ENCODE measurements at regions of chr17 and their contacts with region 1.

Region 1: GRCh38 chr17:41811549-41812380 is at the start of gene P3H4:
- DNase-seq: peak; percentile 80
- H3K4me3 Mint-ChIP-seq: peak within 1 kb of the TSS; percentile 82
- H3K27ac Mint-ChIP-seq: peak within 1 kb of the TSS; percentile 30
- H3K4me1 Mint-ChIP-seq: peaks cover 17% of the 10 kb centered on the region
- H3K27me3 Mint-ChIP-seq: peaks cover 2% of the 10 kb centered on the region
- total RNA-seq, gene P3H4: 2.5 to 2.9 TPM

Region 2: GRCh38 chr17:41786227-41787020 is 25.3 kb before region 1 on chr17 and contains the start of gene JUP:
- CTCF ChIA-PET with region 1: interaction called, 10 read pairs
- POLR2A ChIA-PET with region 1: interaction called, 4 read pairs
- intact Hi-C with region 1: no loop called
- DNase-seq: peak; percentile 94
- H3K4me3 Mint-ChIP-seq: peak within 1 kb of the TSS; percentile 32
- H3K27ac Mint-ChIP-seq: no peak within 1 kb of the TSS
- H3K4me1 Mint-ChIP-seq: peaks cover 12% of the 10 kb centered on the region
- H3K27me3 Mint-ChIP-seq: peaks cover 20% of the 10 kb centered on the region
- total RNA-seq, gene JUP: 0.12 to 0.29 TPM

Measured in activated CD4-positive, alpha-beta memory T cell treated with anti-CD3 and anti-CD28 coated beads for 36 hours (primary cell).